CD4-positive, alpha-beta T cell (primary cell): ENCODE measurements at regions of chr1 and their contacts with region 1.

Region 1: GRCh38 chr1:21324368-21325141 is 34.3 kb upstream of the ECE1 start:
- DNase-seq: peak in 12 of 14 experiments; percentile 35 to 83 (median 52)
- ATAC-seq: peak; percentile 65
- H3K4me3 ChIP-seq: peak overlapping the region; percentile 24
- H3K4me3 Mint-ChIP-seq: peak overlapping the region; percentile 70
- H3K27ac ChIP-seq: peak overlapping the region; percentile 73 to 76
- H3K27ac Mint-ChIP-seq: peak overlapping the region; percentile 93
- H3K4me1 ChIP-seq: peaks cover 77% of the 10 kb centered on the region
- H3K4me1 Mint-ChIP-seq: peaks cover 88% of the 10 kb centered on the region
- H3K27me3 ChIP-seq: no peaks in the 10 kb centered on the region
- H3K27me3 Mint-ChIP-seq: no peaks in the 10 kb centered on the region
- CTCF ChIP-seq: no peak

Region 2: DNA sequence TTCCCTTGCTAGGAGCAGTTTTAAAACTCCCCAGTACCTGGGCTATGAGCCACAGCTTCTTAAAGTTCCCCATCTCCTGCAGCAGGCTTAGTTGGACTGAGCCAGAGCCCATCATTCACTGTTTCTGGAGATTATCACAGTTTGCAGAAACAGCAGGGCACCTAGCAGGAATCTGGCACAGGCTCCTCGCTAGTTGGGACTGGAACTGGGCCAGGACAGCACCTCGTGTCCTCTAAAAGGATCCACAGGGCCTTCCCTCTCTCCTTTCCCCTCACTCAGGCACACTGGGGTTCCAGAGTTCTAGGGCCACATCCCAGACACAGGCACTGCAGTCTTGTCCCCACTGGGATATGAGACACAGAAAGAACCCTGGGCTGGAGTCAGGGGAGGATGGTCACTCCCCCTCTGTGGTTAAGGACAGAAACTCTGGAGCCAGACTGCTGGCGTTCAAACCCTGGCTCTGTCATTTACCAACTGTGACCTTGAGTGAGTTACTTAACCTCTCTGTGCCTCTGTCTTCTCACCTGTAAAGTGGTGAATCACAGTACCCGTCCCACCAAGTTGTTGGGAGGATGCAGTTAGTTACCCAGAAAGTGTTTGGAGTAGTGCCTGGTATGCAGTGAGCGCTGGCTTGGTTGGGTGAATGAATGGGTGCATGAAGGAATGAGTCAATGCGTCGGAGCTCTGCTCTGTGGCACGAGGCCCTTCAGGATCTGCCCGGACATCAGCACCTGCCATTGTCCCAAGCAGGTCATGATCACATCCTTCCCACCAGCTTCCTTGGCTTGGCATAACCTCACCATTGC is 15.5 kb before region 1 on chr1:
- CTCF ChIA-PET with region 1: interaction called, 11 read pairs
- POLR2A ChIA-PET with region 1: interaction called, 16 read pairs
- intact Hi-C with region 1: loop called in 1 of 2 experiments (anchors 2 kb)
- DNase-seq: no peak
- ATAC-seq: no peak
- H3K4me3 ChIP-seq: no peak overlapping the region
- H3K4me3 Mint-ChIP-seq: no peak overlapping the region
- H3K27ac ChIP-seq: no peak overlapping the region
- H3K27ac Mint-ChIP-seq: peak overlapping the region; percentile 55
- H3K4me1 ChIP-seq: peaks cover 67% of the 10 kb centered on the region
- H3K4me1 Mint-ChIP-seq: peaks cover 77% of the 10 kb centered on the region
- H3K27me3 ChIP-seq: no peaks in the 10 kb centered on the region
- H3K27me3 Mint-ChIP-seq: no peaks in the 10 kb centered on the region
- CTCF ChIP-seq: no peak